Aorta (tissue), 5 donors: ENCODE measurements at regions of chr12 and their contacts with region 1.

Region 1: GRCh38 chr12:52156736-52157565 is 34.9 kb downstream of the KRT80 start:
- DNase-seq: peak; percentile 82 to 94
- ATAC-seq: peak; percentile 81
- H3K4me3 ChIP-seq: no peak overlapping the region
- H3K27ac ChIP-seq: no peak overlapping the region
- H3K4me1 ChIP-seq: no peaks in the 10 kb centered on the region
- H3K27me3 ChIP-seq: no peaks in the 10 kb centered on the region

Region 2: DNA sequence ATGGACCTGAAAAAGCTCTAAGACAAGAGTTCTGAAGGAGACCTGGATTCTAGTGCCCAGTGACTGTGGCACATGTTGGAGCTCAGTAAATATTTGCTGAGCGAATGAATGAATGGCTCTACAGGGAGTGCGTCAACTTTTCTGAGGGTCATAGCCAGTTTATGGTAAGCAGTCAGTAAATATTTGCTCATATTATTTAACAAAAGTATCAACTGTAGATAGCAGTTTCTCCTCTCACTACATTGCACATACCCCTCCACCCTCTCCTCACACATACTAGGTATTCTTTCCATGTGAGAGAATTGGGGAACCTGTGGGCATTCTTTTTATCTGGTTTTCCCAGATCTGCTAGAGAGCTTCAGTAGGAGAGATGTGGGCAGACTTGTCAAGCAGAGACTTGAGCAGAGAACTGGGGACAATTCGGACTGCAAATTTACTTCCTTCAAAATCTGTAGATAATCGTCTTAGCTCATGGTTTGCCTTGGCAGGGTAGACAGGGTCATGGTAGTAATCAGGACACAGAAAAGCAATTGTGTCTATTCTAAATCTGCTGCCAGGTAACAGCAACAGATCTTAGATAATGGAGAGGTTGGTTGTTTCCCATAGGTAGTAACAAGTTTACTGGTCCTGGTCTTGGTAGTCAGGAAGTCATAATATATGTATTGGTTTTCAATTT is 726.6 kb before region 1 on chr12:
- intact Hi-C with region 1: no loop called
- DNase-seq: no peak
- ATAC-seq: no peak
- H3K4me3 ChIP-seq: no peak overlapping the region
- H3K27ac ChIP-seq: no peak overlapping the region
- H3K4me1 ChIP-seq: no peaks in the 10 kb centered on the region
- H3K27me3 ChIP-seq: no peaks in the 10 kb centered on the region

Region 3: DNA sequence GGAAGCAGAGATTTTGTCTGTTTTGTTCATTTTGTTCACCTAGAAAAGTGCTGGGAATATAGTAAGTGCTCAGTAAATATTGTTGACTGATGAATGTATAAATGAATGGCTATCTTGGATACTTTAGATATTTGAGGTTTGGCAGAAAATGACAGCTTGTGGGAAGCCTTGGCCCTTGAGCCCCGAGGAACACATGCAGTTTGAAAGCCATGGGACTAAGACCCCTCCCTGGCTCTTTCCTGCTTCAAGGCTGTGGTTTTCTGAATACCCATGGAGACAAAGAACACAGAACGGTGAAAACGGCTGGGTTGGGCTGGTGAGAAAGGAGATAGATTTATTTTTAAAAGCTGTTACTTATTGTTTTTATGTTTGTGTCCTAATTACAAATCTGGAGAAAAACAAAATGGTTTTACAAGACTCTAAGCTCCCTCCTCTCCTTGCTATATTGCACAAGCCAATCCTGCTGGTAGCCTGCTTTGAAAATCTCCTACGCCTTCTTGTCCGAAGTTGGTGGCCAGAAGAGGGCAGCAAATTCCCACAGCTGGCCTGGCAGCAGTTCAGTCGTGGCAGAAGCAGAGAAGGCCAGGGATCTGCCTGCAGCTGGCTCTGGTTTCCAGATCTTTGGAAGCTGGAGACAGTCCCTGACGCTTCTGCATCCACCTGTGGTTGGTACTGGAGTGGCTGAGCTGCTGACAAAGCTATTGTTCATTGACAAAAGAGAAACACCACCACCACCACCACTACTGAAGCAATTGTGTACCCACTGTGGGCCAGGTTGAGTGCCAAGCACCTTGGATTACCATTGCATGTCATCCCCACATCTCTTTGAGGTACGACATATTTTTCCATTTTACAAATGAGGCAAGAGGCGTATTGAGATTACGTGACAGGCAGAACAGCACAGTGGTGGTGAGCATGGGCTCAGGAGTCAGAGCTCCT is 215.5 kb after region 1 on chr12:
- intact Hi-C with region 1: loop called in 1 of 2 experiments (anchors 5 kb)
- DNase-seq: peak; percentile 85 to 91
- ATAC-seq: peak; percentile 85
- H3K4me3 ChIP-seq: no peak overlapping the region
- H3K27ac ChIP-seq: no peak overlapping the region
- H3K4me1 ChIP-seq: no peaks in the 10 kb centered on the region
- H3K27me3 ChIP-seq: no peaks in the 10 kb centered on the region

Region 4: DNA sequence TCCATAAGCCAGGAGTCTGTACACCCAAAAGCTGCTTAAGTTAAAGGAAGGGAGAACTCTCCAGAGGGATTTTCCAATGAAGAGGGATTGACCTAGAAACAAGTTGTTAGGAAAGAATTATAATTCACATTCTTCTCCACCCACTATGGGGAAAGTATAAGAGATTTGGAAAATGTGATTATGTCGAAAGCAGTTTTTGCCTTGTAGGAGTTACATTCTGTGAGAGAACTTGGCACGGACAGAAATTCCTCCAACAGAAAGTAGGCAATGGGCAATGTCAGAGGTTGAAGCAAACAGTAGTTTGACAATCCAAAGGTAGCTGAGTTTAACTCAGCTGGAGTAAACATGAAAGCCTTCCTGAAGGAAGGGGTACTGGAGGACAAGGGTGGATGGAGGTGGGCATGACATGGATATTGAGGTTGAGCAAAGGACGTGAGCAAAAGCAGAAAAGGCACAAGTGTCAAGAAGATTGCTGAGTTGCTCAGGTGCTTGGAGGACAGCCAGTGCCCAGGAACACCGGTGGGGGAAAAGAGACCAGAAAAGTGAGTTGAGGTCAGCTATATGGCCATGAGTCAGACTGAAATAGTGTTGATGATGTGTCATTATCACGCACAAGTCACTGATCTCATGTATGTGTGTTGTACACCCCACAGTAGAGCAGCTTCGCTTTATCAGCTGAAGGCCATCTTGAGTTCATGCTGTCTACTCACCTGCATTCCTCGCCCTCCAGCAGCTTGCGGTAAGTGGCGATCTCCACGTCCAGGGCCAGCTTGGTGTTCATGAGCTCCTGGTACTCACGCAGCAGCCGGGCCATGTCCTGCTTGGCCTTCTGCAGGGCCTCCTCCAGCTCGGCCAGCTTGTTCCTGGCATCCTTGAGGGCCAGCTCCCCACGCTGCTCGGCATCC is 359.2 kb after region 1 on chr12:
- intact Hi-C with region 1: loop called in 1 of 2 experiments (anchors 10 kb)
- DNase-seq: no peak
- ATAC-seq: no peak
- H3K4me3 ChIP-seq: no peak overlapping the region
- H3K27ac ChIP-seq: no peak overlapping the region
- H3K4me1 ChIP-seq: no peaks in the 10 kb centered on the region
- H3K27me3 ChIP-seq: no peaks in the 10 kb centered on the region

Region 5: GRCh38 chr12:52879394-52880351 is 722.7 kb after region 1 on chr12:
- intact Hi-C with region 1: loop called in 1 of 2 experiments (anchors 5 kb)
- DNase-seq: peak; percentile 85 to 88
- ATAC-seq: peak; percentile 90
- H3K4me3 ChIP-seq: no peak overlapping the region
- H3K27ac ChIP-seq: no peak overlapping the region
- H3K4me1 ChIP-seq: no peaks in the 10 kb centered on the region
- H3K27me3 ChIP-seq: no peaks in the 10 kb centered on the region